Activated naive CD4-positive, alpha-beta T cell treated with anti-CD3 and anti-CD28 coated beads for 36 hours (primary cell): ENCODE measurements at regions of chr15 and their contacts with region 1.

Region 1: GRCh38 chr15:71730277-71731144 is 79.8 kb upstream of the NR2E3 start:
- DNase-seq: peak; percentile 54
- H3K4me3 Mint-ChIP-seq: no peak overlapping the region
- H3K27ac Mint-ChIP-seq: no peak overlapping the region
- H3K4me1 Mint-ChIP-seq: no peaks in the 10 kb centered on the region
- H3K27me3 Mint-ChIP-seq: peaks cover 5% of the 10 kb centered on the region

Region 2: GRCh38 chr15:71448688-71449114 is 281.8 kb before region 1 on chr15:
- CTCF ChIA-PET with region 1: interaction called, 3 read pairs
- intact Hi-C with region 1: loop called (anchors 1 kb)
- DNase-seq: peak; percentile 8
- H3K4me3 Mint-ChIP-seq: no peak overlapping the region
- H3K27ac Mint-ChIP-seq: no peak overlapping the region
- H3K4me1 Mint-ChIP-seq: no peaks in the 10 kb centered on the region
- H3K27me3 Mint-ChIP-seq: peaks cover 12% of the 10 kb centered on the region

Region 3: GRCh38 chr15:71532994-71533393 is 197.5 kb before region 1 on chr15:
- CTCF ChIA-PET with region 1: no interaction called
- intact Hi-C with region 1: loop called (anchors 10 kb)
- DNase-seq: peak; percentile 7
- H3K4me3 Mint-ChIP-seq: no peak overlapping the region
- H3K27ac Mint-ChIP-seq: no peak overlapping the region
- H3K4me1 Mint-ChIP-seq: no peaks in the 10 kb centered on the region
- H3K27me3 Mint-ChIP-seq: peaks cover 19% of the 10 kb centered on the region

Region 4: GRCh38 chr15:71575474-71576045 is 155.0 kb before region 1 on chr15:
- CTCF ChIA-PET with region 1: interaction called, 3 read pairs
- intact Hi-C with region 1: loop called (anchors 1 kb)
- DNase-seq: no peak
- H3K4me3 Mint-ChIP-seq: no peak overlapping the region
- H3K27ac Mint-ChIP-seq: no peak overlapping the region
- H3K4me1 Mint-ChIP-seq: no peaks in the 10 kb centered on the region
- H3K27me3 Mint-ChIP-seq: peaks cover 24% of the 10 kb centered on the region

Region 5: GRCh38 chr15:71916834-71917233 is 186.3 kb after region 1 on chr15:
- CTCF ChIA-PET with region 1: no interaction called
- intact Hi-C with region 1: no loop called
- DNase-seq: no peak
- H3K4me3 Mint-ChIP-seq: no peak overlapping the region
- H3K27ac Mint-ChIP-seq: no peak overlapping the region
- H3K4me1 Mint-ChIP-seq: no peaks in the 10 kb centered on the region
- H3K27me3 Mint-ChIP-seq: no peaks in the 10 kb centered on the region

Region 6: GRCh38 chr15:71997691-71998090 is 267.2 kb after region 1 on chr15:
- CTCF ChIA-PET with region 1: no interaction called
- intact Hi-C with region 1: no loop called
- DNase-seq: no peak
- H3K4me3 Mint-ChIP-seq: no peak overlapping the region
- H3K27ac Mint-ChIP-seq: no peak overlapping the region
- H3K4me1 Mint-ChIP-seq: no peaks in the 10 kb centered on the region
- H3K27me3 Mint-ChIP-seq: no peaks in the 10 kb centered on the region